IMR-90 (cell line): ENCODE measurements at regions of chr3 and their contacts with region 1.

Region 1: GRCh38 chr3:107846279-107846852 is 244.5 kb downstream of the CD47 start:
- DNase-seq: peak; percentile 64
- ATAC-seq: peak; percentile 87
- H3K4me3 ChIP-seq: no peak overlapping the region
- H3K27ac ChIP-seq: no peak overlapping the region
- H3K4me1 ChIP-seq: peaks cover 2% of the 10 kb centered on the region; the same call in 1 of the 2 replicates
- H3K27me3 ChIP-seq: no peaks in the 10 kb centered on the region
- CTCF ChIP-seq: peak; percentile 70
- POLR2A ChIP-seq: no peak
- RAD21 ChIP-seq: peak; percentile 66

Region 2: GRCh38 chr3:107206141-107206540 is 640.2 kb before region 1 on chr3:
- CTCF ChIA-PET with region 1: no interaction called
- POLR2A ChIA-PET with region 1: no interaction called
- dilution Hi-C with region 1: no loop called
- in situ Hi-C with region 1: no loop called
- intact Hi-C with region 1: no loop called
- DNase-seq: peak; percentile 59
- ATAC-seq: 0 out of 2 replicates have a peak, but pooled peaks have one; percentile 20
- H3K4me3 ChIP-seq: no peak overlapping the region
- H3K27ac ChIP-seq: no peak overlapping the region
- H3K4me1 ChIP-seq: peaks cover 18% of the 10 kb centered on the region
- H3K27me3 ChIP-seq: no peaks in the 10 kb centered on the region
- CTCF ChIP-seq: peak; percentile 64
- POLR2A ChIP-seq: no peak
- RAD21 ChIP-seq: peak; percentile 69

Region 3: DNA sequence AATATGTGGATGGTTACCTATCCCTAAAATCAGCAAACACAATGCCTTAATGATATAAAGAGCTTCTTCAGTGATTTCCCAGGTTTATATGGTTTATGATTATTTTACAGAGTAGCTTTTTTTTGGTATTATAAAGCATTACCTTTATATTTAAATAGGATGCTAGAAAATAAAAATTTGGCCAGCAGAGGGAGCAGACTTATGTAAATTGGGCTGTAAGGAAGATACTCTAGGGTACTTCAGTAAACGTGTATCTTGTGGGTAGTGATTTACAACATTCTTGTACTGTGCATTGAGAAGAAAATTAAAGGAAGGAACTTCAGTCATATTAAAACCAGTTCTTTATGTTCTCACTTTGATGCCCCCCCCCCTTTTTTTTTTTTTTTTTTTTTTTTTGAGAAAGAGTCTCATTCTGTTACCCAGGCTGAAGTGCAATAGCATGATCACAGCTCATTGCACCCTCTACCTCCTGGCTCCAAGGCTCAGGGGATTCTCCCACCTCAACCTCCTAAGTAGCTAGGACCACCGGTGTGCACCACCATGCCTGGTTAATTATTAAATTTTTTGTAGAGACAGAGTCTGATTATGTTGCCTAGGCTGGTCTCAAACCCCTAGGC is 155.7 kb before region 1 on chr3:
- CTCF ChIA-PET with region 1: no interaction called
- POLR2A ChIA-PET with region 1: no interaction called
- dilution Hi-C with region 1: no loop called
- in situ Hi-C with region 1: no loop called
- intact Hi-C with region 1: loop called (anchors 2 kb)
- DNase-seq: peak; percentile 73
- ATAC-seq: peak; percentile 72
- H3K4me3 ChIP-seq: no peak overlapping the region
- H3K27ac ChIP-seq: no peak overlapping the region
- H3K4me1 ChIP-seq: no peaks in the 10 kb centered on the region
- H3K27me3 ChIP-seq: no peaks in the 10 kb centered on the region
- CTCF ChIP-seq: peak; percentile 57
- POLR2A ChIP-seq: no peak
- RAD21 ChIP-seq: peak; percentile 47

Region 4: GRCh38 chr3:107753480-107753879 is 92.9 kb before region 1 on chr3:
- CTCF ChIA-PET with region 1: no interaction called
- POLR2A ChIA-PET with region 1: no interaction called
- dilution Hi-C with region 1: no loop called
- in situ Hi-C with region 1: no loop called
- intact Hi-C with region 1: loop called (anchors 1 kb)
- DNase-seq: peak; percentile 30
- ATAC-seq: peak; percentile 61; the same call in 1 of the 2 replicates
- H3K4me3 ChIP-seq: no peak overlapping the region
- H3K27ac ChIP-seq: no peak overlapping the region
- H3K4me1 ChIP-seq: no peaks in the 10 kb centered on the region; the same call in 1 of the 2 replicates
- H3K27me3 ChIP-seq: no peaks in the 10 kb centered on the region
- CTCF ChIP-seq: peak; percentile 44
- POLR2A ChIP-seq: no peak
- RAD21 ChIP-seq: peak; percentile 35; the same call in 1 of the 2 replicates

Region 5: GRCh38 chr3:107829185-107829584 is 17.2 kb before region 1 on chr3:
- CTCF ChIA-PET with region 1: no interaction called
- POLR2A ChIA-PET with region 1: no interaction called
- dilution Hi-C with region 1: no loop called
- in situ Hi-C with region 1: no loop called
- intact Hi-C with region 1: no loop called
- DNase-seq: no peak
- ATAC-seq: no peak
- H3K4me3 ChIP-seq: no peak overlapping the region
- H3K27ac ChIP-seq: no peak overlapping the region
- H3K4me1 ChIP-seq: no peaks in the 10 kb centered on the region
- H3K27me3 ChIP-seq: peaks cover 2% of the 10 kb centered on the region
- CTCF ChIP-seq: no peak
- POLR2A ChIP-seq: no peak
- RAD21 ChIP-seq: no peak